HepG2 (cell line): ENCODE measurements at regions of chr16 and their contacts with region 1.

Region 1: DNA sequence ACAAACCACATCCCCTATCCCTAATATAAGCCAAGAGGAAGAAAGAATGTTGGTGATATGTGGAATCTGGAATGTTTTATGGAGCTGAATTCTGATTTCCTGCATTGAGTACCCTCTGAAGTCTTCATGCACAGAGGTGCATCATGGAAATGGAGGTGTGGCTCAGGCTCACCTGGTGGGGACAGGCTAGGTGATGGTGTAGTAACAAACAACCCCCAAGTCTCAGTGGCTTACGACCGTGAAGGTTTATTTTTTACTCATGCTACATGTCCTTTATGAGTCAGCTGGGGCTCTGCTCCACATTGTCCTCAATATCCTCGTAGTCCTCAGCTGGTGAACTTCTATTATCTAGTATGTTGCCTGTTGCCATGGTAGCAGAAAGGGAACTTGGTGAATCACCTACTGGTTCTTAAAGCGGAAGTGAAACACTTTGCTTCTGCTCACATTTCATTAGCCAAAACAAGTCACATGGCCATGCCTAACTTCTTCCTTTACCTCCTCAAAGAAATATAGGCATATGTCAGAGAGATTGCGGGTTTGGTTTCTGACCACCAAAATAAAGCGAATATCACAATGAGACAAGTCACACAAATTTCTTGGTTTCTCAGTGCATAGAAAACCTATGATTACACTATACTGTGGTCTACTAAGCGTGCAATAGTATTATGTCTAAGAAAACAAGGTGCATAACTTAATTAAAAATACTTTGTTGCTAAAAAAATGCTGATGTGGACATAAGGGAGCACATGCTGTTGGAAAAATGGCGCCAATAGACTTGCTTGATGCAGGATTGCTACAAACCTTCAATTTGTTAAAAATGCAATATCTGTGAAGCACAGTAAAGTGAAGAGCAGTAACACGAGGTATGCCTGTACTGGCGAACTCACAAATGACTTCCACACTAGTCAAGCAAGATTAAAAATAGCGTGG is at the start of gene PMFBP1:
- DNase-seq: peak; percentile 35
- ATAC-seq: no peak
- H3K4me3 ChIP-seq: no peak within 1 kb of the TSS
- H3K27ac ChIP-seq: no peak within 1 kb of the TSS
- H3K4me1 ChIP-seq: no peaks in the 10 kb centered on the region
- H3K27me3 ChIP-seq: no peaks in the 10 kb centered on the region
- CTCF ChIP-seq: no peak
- EP300 ChIP-seq: no peak
- POLR2A ChIP-seq: no peak
- RAD21 ChIP-seq: no peak
- total RNA-seq, gene PMFBP1: 2.4 and 3.8 TPM in 2 replicates

Region 2: DNA sequence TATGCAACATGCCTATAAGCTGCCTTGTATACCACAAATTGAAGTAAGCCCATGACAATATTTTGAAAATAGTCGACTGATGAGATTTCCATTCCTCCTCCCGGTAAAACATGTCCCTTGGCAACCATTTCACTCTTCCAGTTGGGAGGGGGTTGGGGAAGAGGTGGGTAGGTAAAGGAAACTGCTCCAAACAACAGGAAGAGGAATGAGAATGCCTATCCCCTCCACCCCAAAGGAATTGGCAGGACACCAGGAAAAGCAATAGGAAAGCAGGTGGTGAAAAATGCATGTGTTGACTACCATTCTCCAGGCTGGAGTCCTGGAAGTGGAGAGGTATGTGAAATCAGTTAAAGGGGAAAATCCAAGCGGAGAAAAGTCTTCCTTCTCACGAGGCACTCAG is 1668.4 kb after region 1 on chr16:
- CTCF ChIA-PET with region 1: no interaction called
- POLR2A ChIA-PET with region 1: no interaction called
- in situ Hi-C with region 1: no loop called
- intact Hi-C with region 1: loop called (anchors 5 kb)
- DNase-seq: no peak
- ATAC-seq: no peak
- H3K4me3 ChIP-seq: no peak overlapping the region
- H3K27ac ChIP-seq: no peak overlapping the region
- H3K4me1 ChIP-seq: no peaks in the 10 kb centered on the region
- H3K27me3 ChIP-seq: peaks cover 0 to 9% of the 10 kb centered on the region in 2 experiments; a peak in 3 of 5 replicates
- CTCF ChIP-seq: no peak
- EP300 ChIP-seq: no peak
- POLR2A ChIP-seq: no peak
- RAD21 ChIP-seq: no peak